ENCODE measurements at regions of chr11 and their contacts with region 1.

Region 1: DNA sequence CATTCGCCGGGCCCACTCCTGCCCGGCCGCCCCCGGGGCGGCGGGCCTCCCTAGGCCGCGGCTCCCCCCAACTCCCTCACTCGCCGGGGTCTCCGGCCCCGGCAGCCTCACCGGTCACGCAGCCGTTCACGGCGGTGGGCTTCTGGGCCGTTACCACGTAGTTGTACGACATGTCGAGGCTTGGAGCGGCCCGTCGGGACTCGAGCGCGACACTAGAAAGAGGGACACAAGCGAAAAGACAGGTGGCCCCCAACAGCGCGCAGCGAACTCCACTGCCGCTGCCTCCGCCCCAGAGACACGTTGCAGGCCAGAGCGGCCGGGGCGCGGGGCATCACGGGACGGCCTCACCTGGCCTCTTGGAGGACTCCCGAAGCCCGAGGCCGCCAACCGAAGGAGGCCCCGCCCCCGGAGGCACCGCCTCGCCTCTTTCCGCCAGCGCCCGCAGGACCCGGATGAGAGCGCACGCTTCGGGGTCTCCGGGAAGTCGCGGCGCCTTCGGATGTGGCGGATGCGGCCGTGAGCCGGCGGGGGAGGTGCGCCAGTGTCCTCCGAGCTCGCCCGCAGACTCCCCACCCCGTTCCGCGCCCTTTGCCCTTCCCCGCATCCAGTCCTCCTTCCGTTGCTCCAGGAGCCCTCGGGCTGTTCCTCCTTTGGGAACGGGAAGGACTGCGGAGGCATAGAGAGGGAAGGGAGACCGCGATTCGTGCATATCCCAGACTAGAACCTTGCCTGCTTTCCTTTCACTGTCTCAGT is at the starts of genes DDB1 and TKFC:
- DNase-seq: peak; percentile 93 to 97 (median 97)
- H3K4me3 ChIP-seq: peak within 1 kb of the TSS; percentile 75 to 94 (median 85)
- H3K27ac ChIP-seq: peak within 1 kb of the TSS; percentile 93 to 97
- H3K4me1 ChIP-seq: peaks cover 4 to 50% (median 31%) of the 10 kb centered on the region in 4 experiments
- H3K27me3 ChIP-seq: no peaks in the 10 kb centered on the region

Region 2: DNA sequence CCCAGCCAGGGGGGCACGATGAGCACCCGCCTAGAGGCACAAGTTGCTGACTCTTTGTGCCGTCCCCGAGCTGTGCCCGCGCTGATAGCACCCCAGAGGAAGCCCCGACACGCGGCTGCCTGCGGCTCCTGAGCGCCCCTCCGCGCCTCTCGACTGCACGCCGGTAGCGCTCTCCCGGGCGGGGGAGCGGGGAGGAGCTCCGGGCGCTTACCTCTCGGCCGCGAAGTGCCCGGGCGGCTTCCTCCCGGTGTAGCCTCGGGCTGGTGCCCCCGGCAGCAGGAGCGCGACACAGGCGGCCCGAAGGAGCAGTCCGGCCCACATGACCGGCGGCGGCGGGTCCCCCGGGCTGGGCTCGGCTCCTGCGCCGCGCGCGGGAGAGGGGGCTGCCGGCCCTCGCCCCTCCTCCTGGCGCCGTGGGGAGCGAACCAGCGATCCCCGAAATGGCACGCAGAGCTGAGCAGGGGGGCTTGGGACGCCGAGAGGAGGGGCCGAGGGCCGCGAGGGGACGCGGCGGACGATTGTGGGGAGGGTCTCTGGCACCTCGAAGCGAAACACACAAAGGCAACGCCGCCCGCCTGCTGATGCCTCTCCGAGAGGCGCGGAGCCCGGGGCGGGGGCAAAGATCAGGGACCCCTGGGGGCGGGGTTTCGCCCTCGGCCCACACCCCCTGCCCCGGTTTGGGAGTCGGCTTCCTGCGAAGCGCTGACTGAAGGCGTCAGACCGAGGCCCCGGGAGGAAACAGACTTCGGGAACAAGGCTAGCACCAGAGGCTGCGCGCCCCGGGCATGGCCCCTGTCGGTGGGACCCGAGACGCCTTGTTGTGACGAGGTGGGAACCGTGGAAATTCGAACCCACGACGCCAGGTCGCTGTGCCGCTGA is 38.0 kb before region 1 on chr11 and contains the start of gene VWCE:
- CTCF ChIA-PET with region 1: interaction called, 10 read pairs
- POLR2A ChIA-PET with region 1: no interaction called
- DNase-seq: peak; percentile 75 to 91 (median 84)
- H3K4me3 ChIP-seq: peak within 1 kb of the TSS; percentile 19 to 80 (median 72)
- H3K27ac ChIP-seq: no peak within 1 kb of the TSS
- H3K4me1 ChIP-seq: peaks cover 4 to 50% (median 38%) of the 10 kb centered on the region in 4 experiments
- H3K27me3 ChIP-seq: no peaks in the 10 kb centered on the region

Region 3: DNA sequence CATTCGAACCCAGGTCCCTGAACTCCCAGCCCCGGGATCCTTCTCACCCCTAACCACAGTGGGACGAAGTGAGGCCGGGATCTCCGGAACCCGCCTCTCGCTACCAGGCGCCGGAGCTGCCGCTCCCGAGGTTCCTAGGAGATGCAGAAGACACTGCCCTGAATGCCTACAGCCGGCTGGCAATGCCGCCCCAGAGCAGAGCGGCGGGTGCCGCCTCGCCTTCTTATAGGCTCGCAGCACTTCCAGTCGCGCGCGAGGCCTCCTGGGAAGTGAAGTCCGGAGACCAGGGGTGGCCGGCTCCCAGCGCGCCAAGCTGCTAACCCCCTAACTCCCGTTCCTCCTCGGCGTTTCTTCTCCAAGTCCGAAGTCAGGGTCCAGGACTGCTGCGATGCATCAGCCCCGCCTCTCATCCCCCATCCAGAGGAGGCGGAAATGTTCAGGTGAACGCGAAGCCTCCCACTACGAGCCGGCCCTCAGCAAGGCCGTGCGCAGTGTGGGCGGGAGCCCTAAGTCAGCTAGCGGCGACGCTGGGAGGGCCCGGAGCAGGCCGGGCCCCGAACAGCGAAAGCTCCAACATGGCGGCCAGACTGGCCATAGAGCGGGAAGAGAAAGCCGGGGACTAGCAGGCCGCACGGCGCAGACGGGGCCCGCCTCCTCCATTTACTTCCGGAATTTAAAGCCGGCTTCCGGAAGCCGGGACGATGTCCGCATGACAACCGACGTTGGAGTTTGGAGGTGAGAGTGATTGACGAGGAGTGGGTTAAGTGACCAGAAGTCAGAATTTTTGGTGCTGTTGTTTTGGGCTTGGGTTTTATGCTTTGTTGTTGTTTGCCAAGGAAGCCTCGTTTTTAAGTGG is 28.9 kb after region 1 on chr11 and contains the starts of genes CYB561A3 and TMEM138:
- CTCF ChIA-PET with region 1: interaction called, 244 read pairs
- POLR2A ChIA-PET with region 1: interaction called, 3 read pairs
- DNase-seq: peak; percentile 90 to 96 (median 95)
- H3K4me3 ChIP-seq: peak within 1 kb of the TSS; percentile 78 to 99 (median 94)
- H3K27ac ChIP-seq: peak within 1 kb of the TSS; percentile 91 to 96
- H3K4me1 ChIP-seq: peaks cover 11 to 47% (median 39%) of the 10 kb centered on the region in 4 experiments
- H3K27me3 ChIP-seq: no peaks in the 10 kb centered on the region

Region 4: GRCh38 chr11:61392981-61393595 is 60.1 kb after region 1 on chr11:
- CTCF ChIA-PET with region 1: interaction called, 341 read pairs
- POLR2A ChIA-PET with region 1: interaction called, 4 read pairs
- DNase-seq: peak; percentile 55 to 68 (median 64)
- H3K4me3 ChIP-seq: peak overlapping the region; percentile 74 to 95 (median 81)
- H3K27ac ChIP-seq: peak overlapping the region; percentile 40 to 78
- H3K4me1 ChIP-seq: peaks cover 4 to 24% (median 21%) of the 10 kb centered on the region in 4 experiments
- H3K27me3 ChIP-seq: no peaks in the 10 kb centered on the region